ENCODE measurements at regions of chr9 and their contacts with region 1.

Region 1: GRCh38 chr9:32011049-32011448 is 373.4 kb upstream of the ACO1 start:
- DNase-seq: no peak
- ATAC-seq: no peak
- H3K4me3 ChIP-seq: no peak overlapping the region
- H3K27ac ChIP-seq: no peak overlapping the region
- H3K4me1 ChIP-seq: no peaks in the 10 kb centered on the region
- H3K27me3 ChIP-seq: no peaks in the 10 kb centered on the region
- CTCF ChIP-seq: no peak

Region 2: DNA sequence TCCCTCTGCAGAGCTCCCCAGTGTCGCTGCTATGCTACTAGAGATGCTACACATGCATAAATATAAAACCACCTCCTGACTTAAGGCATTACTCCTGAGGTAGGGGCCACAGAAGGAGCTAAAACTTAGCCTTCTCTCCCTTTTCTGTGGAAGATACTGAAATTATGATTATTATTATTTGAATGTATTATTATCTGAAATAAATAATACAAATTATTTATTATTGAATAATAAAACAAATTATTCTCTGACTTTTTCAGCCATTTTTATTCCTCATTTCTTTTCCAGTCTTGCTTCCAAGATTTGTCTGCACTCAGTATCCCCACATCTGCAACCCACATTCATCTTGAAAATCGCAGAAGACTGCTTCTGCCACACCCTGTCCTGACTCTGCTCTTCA is 41.5 kb before region 1 on chr9:
- intact Hi-C with region 1: loop called in 1 of 10 experiments (anchors 10 kb)
- DNase-seq: no peak
- ATAC-seq: no peak
- H3K4me3 ChIP-seq: no peak overlapping the region
- H3K27ac ChIP-seq: no peak overlapping the region
- H3K4me1 ChIP-seq: no peaks in the 10 kb centered on the region
- H3K27me3 ChIP-seq: no peaks in the 10 kb centered on the region
- CTCF ChIP-seq: no peak